ENCODE measurements at regions of chr4 and their contacts with region 1.

Region 1: DNA sequence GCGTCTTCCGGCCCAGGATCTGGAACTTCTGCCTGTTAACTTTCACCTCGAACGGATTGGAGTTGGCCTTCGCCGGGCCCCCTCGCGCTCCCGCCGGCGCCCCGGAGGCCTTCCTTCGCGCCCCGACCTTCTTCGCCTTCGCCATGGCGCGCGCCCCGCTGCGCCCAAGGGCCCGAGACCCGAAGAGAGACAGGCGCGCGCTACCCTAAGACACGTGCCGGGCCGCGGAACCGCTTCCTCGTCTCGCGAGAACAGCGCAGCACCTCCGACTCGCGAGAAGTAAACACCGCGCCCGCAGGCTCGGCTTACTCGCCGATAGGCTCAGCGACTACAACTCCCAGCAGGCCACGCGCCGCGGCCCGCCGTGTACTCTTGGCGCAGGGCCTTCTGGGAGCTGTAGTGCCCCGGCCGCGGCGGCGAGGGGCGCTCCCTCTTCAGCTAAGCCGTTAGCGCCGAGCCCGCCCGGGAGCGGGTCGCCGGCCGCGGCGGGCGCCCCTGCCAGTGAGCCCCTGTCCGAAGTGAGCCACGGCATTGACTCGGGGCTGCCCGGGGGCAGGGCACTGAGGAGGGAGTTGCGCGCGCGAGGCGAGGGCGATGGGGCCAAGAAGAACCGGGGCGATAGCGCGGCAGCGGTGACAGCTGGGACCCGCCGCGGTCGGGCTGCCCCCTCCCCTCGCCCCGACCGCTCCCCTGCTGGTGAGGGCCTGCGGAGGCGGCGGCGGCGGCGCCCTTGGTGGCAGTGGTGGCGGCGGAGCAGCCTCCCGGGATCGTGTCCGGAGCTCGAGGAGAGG is at the starts of genes GRK4 and NOP14:
- DNase-seq: peak; percentile 96
- H3K4me3 Mint-ChIP-seq: peak within 1 kb of the TSS; percentile 97
- H3K27ac Mint-ChIP-seq: peak within 1 kb of the TSS; percentile 92
- H3K4me1 Mint-ChIP-seq: peaks cover 28% of the 10 kb centered on the region
- H3K27me3 Mint-ChIP-seq: no peaks in the 10 kb centered on the region
- total RNA-seq, gene GRK4: 4.4 and 4.5 TPM in 2 replicates
- total RNA-seq, gene NOP14: 140 and 142 TPM in 2 replicates

Region 2: DNA sequence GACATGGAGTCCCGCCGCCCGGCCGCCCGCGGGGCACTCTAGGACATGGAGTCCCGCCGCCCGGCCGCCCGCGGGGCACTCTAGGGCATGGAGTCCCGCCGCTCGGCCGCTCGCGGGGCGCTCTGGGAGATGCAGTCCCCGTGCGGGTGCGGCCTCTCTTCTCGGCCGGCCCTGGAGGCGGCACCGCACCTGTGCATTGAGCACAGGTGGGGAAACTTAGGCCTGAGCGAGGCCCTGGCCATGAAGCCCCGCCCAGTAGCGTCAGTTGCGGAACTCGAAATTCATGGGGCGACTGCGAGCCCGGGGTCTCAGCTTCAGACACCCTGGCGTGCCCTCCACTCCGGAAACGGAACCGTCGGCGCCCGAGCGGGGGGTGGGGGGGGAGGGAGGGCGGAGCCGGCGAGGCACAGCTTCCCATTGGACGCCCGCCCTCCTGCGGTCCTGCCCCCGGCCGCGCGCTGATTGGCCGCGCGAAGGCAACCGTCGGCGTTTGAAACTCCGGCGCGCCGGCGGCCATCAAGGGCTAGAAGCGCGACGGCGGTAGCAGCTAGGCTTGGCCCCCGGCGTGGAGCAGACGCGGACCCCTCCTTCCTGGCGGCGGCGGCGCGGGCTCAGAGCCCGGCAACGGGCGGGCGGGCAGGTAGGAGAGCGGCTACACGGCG is 1242.2 kb before region 1 on chr4 and contains the starts of genes TACC3 and TMEM129:
- intact Hi-C with region 1: loop called (anchors 2 kb)
- DNase-seq: peak; percentile 90
- H3K4me3 Mint-ChIP-seq: peak within 1 kb of the TSS; percentile 94
- H3K27ac Mint-ChIP-seq: peak within 1 kb of the TSS; percentile 97
- H3K4me1 Mint-ChIP-seq: peaks cover 45% of the 10 kb centered on the region
- H3K27me3 Mint-ChIP-seq: no peaks in the 10 kb centered on the region
- total RNA-seq, gene TACC3: 134 and 139 TPM in 2 replicates
- total RNA-seq, gene TMEM129: 27.4 and 28.4 TPM in 2 replicates

Region 3: GRCh38 chr4:2843263-2843940 is 120.0 kb before region 1 on chr4 and contains the start of gene ADD1:
- intact Hi-C with region 1: loop called (anchors 1 kb)
- DNase-seq: peak; percentile 97
- H3K4me3 Mint-ChIP-seq: peak within 1 kb of the TSS; percentile 95
- H3K27ac Mint-ChIP-seq: peak within 1 kb of the TSS; percentile 92
- H3K4me1 Mint-ChIP-seq: peaks cover 49% of the 10 kb centered on the region
- H3K27me3 Mint-ChIP-seq: no peaks in the 10 kb centered on the region
- total RNA-seq, gene ADD1: 200 and 203 TPM in 2 replicates

Region 4: DNA sequence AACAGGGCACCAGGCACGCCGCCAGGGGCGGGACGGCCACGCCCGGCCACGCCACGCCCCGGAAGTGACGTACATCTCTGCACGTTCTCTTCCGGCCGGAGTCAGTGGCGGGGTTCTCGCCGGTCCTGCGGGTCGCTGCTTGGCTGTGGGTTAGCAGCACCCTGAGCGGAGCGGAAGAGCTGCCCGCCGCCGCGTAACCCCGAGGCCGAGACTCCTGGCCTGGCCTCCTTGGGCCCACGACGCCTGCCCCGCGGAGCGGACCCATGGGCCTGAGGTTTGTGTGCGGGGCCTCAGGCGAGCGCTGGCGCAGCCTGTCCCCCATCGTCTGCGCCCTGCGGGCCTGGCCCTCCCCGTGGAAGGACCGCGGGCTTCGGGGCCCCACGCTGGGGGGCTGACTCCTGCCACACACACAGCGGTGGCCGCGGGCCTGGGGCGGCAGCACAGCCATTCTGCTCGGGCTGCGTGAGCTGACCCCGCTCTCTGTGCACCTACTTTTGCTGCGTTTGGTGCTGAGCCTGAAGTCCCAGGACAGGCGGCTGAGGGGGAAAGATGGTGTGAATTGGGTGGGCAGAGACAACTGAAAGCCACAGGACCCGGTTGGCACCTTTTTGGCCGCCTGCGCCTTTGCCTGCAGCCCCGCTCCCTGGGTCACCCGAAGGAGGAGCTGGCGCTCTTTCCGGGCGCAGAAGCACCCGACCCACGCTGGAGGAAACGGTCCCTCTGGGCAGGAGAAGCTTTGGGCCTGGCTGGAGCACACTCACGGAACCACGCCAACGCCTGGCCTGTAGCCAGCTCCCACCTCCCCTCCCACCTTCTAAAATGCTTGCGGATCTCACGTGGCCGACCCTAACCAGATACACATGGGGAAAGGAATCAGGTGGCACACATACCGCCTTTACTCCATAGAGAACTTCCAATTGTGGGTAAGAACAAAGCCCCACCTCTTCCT is 28.3 kb before region 1 on chr4:
- intact Hi-C with region 1: loop called (anchors 1 kb)
- DNase-seq: peak; percentile 95
- H3K4me3 Mint-ChIP-seq: peak overlapping the region; percentile 94
- H3K27ac Mint-ChIP-seq: peak overlapping the region; percentile 87
- H3K4me1 Mint-ChIP-seq: peaks cover 49% of the 10 kb centered on the region
- H3K27me3 Mint-ChIP-seq: no peaks in the 10 kb centered on the region

Region 5: GRCh38 chr4:3037957-3038461 is 74.6 kb after region 1 on chr4:
- intact Hi-C with region 1: loop called (anchors 1 kb)
- DNase-seq: peak; percentile 6
- H3K4me3 Mint-ChIP-seq: peak overlapping the region; percentile 57
- H3K27ac Mint-ChIP-seq: peak overlapping the region; percentile 18
- H3K4me1 Mint-ChIP-seq: peaks cover 34% of the 10 kb centered on the region
- H3K27me3 Mint-ChIP-seq: peaks cover 28% of the 10 kb centered on the region

Region 6: GRCh38 chr4:3047464-3048286 is 84.3 kb after region 1 on chr4:
- intact Hi-C with region 1: loop called (anchors 1 kb)
- DNase-seq: peak; percentile 80
- H3K4me3 Mint-ChIP-seq: peak overlapping the region; percentile 49
- H3K27ac Mint-ChIP-seq: peak overlapping the region; percentile 48
- H3K4me1 Mint-ChIP-seq: peaks cover 38% of the 10 kb centered on the region
- H3K27me3 Mint-ChIP-seq: peaks cover 26% of the 10 kb centered on the region

Region 7: GRCh38 chr4:3201718-3202702 is 238.6 kb after region 1 on chr4:
- intact Hi-C with region 1: loop called (anchors 10 kb)
- DNase-seq: peak; percentile 74
- H3K4me3 Mint-ChIP-seq: peak overlapping the region; percentile 70
- H3K27ac Mint-ChIP-seq: peak overlapping the region; percentile 94
- H3K4me1 Mint-ChIP-seq: peaks cover 31% of the 10 kb centered on the region
- H3K27me3 Mint-ChIP-seq: no peaks in the 10 kb centered on the region